A673 (cell line): ENCODE measurements at regions of chr15 and their contacts with region 1.

Region 1: GRCh38 chr15:81274931-81275707 is 48.8 kb downstream of the STARD5 start:
- DNase-seq: peak; percentile 85
- H3K4me3 ChIP-seq: no peak overlapping the region
- H3K27ac ChIP-seq: no peak overlapping the region
- H3K4me1 ChIP-seq: no peaks in the 10 kb centered on the region
- H3K27me3 ChIP-seq: no peaks in the 10 kb centered on the region
- CTCF ChIP-seq: peak; percentile 80

Region 2: GRCh38 chr15:81323944-81324881 is 49.1 kb after region 1 on chr15 and contains the start of gene STARD5:
- CTCF ChIA-PET with region 1: interaction called, 6 read pairs
- POLR2A ChIA-PET with region 1: no interaction called
- intact Hi-C with region 1: loop called (anchors 5 kb)
- DNase-seq: peak; percentile 97
- H3K4me3 ChIP-seq: peak within 1 kb of the TSS; percentile 54
- H3K27ac ChIP-seq: no peak within 1 kb of the TSS
- H3K4me1 ChIP-seq: no peaks in the 10 kb centered on the region
- H3K27me3 ChIP-seq: no peaks in the 10 kb centered on the region
- CTCF ChIP-seq: no peak
- total RNA-seq, gene STARD5: 0.54 and 2.1 TPM in 2 replicates

Region 3: DNA sequence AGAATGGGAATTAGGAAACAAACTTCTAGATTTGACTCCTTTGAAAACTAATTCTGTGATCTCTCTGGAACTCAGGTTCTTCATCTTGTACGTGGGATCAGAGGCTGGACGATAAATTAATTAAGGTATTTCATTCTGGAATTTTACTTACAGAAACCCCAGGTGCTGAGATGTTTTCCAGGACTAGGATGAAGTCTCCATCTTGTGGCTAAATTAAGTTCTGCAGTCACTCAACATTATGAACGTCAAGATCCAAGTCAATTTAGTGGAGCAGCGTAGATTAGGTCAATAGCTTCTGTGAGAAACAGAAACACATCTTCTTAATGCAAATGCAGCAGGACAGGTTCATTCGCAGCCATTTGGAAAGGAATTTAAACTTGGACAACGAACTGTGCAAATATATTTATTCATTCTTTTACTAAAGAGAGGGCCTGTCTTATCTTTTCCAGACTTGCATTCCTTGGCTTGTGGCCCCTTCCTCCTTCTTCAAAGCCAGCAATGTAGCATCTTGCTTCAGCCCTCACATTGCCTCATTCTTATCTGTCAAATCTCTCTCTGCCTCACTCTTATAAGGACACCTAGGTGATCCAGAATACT is 125.6 kb after region 1 on chr15:
- CTCF ChIA-PET with region 1: interaction called, 15 read pairs
- POLR2A ChIA-PET with region 1: no interaction called
- intact Hi-C with region 1: loop called (anchors 1 kb)
- DNase-seq: peak; percentile 38
- H3K4me3 ChIP-seq: no peak overlapping the region
- H3K27ac ChIP-seq: no peak overlapping the region
- H3K4me1 ChIP-seq: no peaks in the 10 kb centered on the region
- H3K27me3 ChIP-seq: peaks cover 22% of the 10 kb centered on the region
- CTCF ChIP-seq: peak; percentile 72

Region 4: DNA sequence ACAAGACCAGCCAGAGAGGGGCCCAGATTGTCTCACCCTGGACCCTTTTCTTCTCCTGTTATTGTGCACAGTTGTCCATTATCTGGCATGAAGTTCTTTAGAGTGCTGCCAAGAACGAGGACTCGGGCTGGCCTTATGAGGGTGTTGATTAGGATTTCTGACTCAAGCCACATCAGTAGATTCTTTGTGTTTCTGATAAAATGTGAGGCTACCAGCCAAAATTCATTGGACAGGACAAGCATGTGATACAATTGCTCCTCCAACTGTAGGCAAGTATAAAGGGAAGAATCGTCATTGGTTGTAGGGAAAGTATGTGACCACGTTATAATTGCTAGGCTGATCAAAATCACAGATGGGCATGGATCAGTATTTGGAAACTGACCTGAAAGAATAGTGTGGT is 198.1 kb after region 1 on chr15:
- CTCF ChIA-PET with region 1: no interaction called
- POLR2A ChIA-PET with region 1: no interaction called
- intact Hi-C with region 1: loop called (anchors 10 kb)
- DNase-seq: no peak
- H3K4me3 ChIP-seq: no peak overlapping the region
- H3K27ac ChIP-seq: no peak overlapping the region
- H3K4me1 ChIP-seq: no peaks in the 10 kb centered on the region
- H3K27me3 ChIP-seq: peaks cover 36% of the 10 kb centered on the region
- CTCF ChIP-seq: no peak

Region 5: DNA sequence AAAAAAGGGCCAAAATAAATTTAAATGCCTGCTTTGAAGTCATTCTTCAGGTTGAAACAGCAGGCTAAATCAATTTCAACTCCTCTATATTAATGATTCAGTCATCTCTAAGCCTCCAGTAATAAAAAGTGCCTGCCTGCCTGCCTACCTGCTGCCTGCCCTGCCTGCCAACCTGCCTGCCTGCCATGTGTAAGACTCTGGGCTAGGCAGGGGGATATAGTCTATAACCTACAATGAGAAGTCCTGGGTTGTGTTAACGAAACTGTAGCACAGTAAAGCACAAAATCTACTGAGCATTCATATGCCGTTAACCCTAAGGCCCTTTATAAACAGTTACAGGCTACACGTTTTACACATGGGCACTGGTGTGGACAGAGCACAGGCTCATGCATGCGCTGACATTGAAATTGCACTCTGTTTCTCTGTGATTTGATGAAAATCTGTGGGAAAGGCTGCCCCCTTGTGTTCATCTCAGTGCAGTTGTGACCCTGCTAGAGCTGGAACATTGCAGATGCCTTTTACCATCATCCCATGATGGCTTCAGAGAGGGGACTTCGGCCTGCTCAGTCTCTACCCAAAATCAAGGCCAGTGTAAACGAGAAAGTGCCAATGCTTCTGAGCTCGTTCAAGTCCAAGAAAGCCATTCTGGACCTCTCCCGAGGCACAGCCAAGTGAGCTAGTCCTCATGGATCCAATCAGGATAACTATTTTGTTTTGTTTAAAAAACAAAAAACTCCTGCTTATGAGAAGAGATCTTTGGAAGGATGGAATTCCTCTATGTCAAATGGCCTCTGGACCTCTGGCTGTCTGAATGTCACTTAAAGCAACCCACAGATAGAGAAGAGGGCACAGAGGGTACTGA is 922.8 kb after region 1 on chr15:
- CTCF ChIA-PET with region 1: no interaction called
- POLR2A ChIA-PET with region 1: no interaction called
- intact Hi-C with region 1: loop called (anchors 5 kb)
- DNase-seq: peak; percentile 76
- H3K4me3 ChIP-seq: no peak overlapping the region
- H3K27ac ChIP-seq: no peak overlapping the region
- H3K4me1 ChIP-seq: no peaks in the 10 kb centered on the region
- H3K27me3 ChIP-seq: no peaks in the 10 kb centered on the region
- CTCF ChIP-seq: peak; percentile 78